ENCODE measurements at regions of chr10 and their contacts with region 1.

Region 1: GRCh38 chr10:6088721-6089390 is at the start of gene RBM17:
- DNase-seq: peak; percentile 96
- H3K4me3 Mint-ChIP-seq: peak within 1 kb of the TSS; percentile 98
- H3K27ac Mint-ChIP-seq: peak within 1 kb of the TSS; percentile 75
- H3K4me1 Mint-ChIP-seq: peaks cover 74% of the 10 kb centered on the region
- H3K27me3 Mint-ChIP-seq: peaks cover 4% of the 10 kb centered on the region

Region 2: GRCh38 chr10:6014241-6014761 is 74.6 kb before region 1 on chr10:
- CTCF ChIA-PET with region 1: interaction called, 25 read pairs
- DNase-seq: peak; percentile 77
- H3K4me3 Mint-ChIP-seq: peak overlapping the region; percentile 30
- H3K27ac Mint-ChIP-seq: peak overlapping the region; percentile 99
- H3K4me1 Mint-ChIP-seq: peaks cover 43% of the 10 kb centered on the region
- H3K27me3 Mint-ChIP-seq: no peaks in the 10 kb centered on the region

Region 3: DNA sequence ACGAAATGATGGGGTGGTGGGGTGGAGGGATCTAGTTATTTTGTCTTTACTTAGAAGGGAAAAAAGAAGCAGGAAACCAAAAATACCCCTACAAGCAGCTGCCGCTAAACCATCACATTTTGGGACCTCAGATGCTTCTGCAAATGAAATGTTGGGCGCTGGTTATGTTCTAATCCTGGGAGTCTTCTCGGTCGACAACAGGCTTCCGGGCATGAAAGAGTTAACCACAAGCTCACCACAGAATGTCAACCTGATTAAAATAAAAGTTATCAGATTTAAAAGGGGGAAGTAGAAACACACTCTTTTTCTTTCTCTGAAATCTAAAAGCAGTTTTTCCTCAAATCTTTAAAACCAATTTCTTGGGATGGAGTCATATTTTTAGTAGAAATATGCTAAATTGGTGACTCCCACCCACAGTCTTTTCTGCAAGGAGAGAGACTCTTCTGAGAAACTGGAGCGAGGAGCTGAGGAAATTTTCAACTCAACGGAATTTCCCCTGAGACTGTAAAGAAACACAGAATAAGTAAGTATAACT is 43.5 kb before region 1 on chr10:
- CTCF ChIA-PET with region 1: interaction called, 47 read pairs
- DNase-seq: peak; percentile 58
- H3K4me3 Mint-ChIP-seq: peak overlapping the region; percentile 69
- H3K27ac Mint-ChIP-seq: peak overlapping the region; percentile 88
- H3K4me1 Mint-ChIP-seq: peaks cover 89% of the 10 kb centered on the region
- H3K27me3 Mint-ChIP-seq: no peaks in the 10 kb centered on the region

Region 4: DNA sequence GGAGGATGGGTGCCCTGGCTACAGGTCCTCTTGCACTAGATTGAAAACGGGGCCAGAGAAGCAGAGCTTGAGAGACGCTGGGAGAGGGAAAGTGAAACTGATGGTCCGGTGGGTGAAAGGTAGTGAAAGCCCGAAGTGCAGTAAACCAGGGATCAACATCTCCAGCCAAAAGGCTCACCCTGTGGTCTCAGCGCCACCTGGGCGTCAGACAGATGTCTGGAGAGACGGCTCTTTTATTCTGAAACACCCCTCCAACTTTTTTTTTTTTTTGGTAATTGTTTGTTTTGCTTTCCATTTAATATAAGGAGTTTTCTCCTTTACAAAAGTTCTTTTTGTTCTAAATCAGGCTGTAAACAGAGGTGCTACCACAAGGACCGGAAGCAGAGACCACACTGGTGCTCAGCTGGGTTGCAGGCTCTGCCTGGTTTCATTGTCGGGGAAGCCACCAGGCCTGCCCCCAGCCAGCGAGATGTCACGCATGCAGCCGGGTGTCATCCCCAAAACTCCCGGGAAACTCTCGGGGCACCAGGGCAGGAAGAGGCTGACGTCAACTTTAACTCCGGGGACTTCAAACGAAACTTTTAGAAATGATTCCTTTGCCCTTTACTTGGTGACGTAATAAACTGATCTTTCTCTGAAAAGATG is 37.9 kb before region 1 on chr10:
- CTCF ChIA-PET with region 1: interaction called, 47 read pairs
- DNase-seq: peak; percentile 97
- H3K4me3 Mint-ChIP-seq: peak overlapping the region; percentile 87
- H3K27ac Mint-ChIP-seq: peak overlapping the region; percentile 99
- H3K4me1 Mint-ChIP-seq: peaks cover 86% of the 10 kb centered on the region
- H3K27me3 Mint-ChIP-seq: no peaks in the 10 kb centered on the region

Region 5: DNA sequence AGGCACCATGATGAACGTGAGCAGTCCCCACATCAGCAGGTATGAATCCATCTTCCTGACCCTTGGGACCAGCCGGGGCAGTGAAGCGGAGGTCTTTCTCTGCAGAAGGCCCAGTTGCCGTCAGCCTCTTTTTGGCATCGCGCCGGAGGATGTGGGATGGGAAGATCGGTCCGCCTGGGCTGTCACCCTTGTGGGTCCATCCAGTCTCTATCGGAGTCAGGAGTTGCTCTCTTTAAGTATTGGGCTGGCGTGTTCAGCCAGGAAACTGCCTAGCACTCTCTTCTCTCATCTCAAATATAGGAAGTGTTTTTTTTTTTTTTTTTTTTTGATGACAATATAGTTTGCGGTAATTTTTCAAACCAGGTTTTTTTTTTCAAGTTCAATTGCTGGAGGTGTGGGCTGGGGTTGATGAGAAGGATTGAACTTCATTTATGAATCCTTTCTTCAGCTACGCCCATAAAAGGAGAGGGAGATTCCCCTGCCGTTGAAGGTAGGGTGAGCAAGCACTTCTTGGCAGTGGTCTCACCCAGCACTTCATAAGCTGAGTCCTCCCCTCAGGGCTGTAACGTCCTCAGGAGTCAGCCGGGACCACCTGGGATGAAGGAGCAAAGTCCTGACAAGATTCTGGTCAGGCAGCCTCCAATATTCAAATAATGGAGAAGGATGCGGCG is 26.6 kb before region 1 on chr10 and contains the start of gene IL2RA:
- CTCF ChIA-PET with region 1: interaction called, 69 read pairs
- DNase-seq: peak; percentile 75
- H3K4me3 Mint-ChIP-seq: peak within 1 kb of the TSS; percentile 81
- H3K27ac Mint-ChIP-seq: peak within 1 kb of the TSS; percentile 95
- H3K4me1 Mint-ChIP-seq: peaks cover 74% of the 10 kb centered on the region
- H3K27me3 Mint-ChIP-seq: no peaks in the 10 kb centered on the region

Region 6: DNA sequence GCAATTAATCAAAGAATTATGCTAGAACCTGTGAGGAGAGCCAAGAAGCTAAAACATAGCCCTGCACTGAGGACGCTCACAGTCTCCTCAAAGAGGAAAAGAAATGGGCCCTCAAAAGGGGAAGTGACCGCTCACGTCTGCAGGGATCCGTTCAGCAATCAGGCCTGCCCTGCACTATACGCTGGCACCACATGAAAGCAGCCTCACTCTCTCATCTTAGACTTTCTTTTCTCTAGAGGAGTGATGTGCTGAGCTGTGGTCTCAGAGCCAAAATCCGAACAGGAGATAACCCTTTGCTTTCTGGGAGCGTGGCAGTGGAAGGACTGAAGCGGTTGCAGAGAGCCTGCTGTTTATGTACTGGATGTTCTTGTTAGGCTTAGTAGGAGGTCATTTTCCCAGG is 20.4 kb before region 1 on chr10:
- CTCF ChIA-PET with region 1: interaction called, 69 read pairs
- DNase-seq: peak; percentile 82
- H3K4me3 Mint-ChIP-seq: peak overlapping the region; percentile 70
- H3K27ac Mint-ChIP-seq: peak overlapping the region; percentile 97
- H3K4me1 Mint-ChIP-seq: peaks cover 95% of the 10 kb centered on the region
- H3K27me3 Mint-ChIP-seq: no peaks in the 10 kb centered on the region

Measured in activated naive CD4-positive, alpha-beta T cell treated with anti-CD3 and anti-CD28 coated beads, Interleukin-2, amount 10 ng/mL, durations not matched to agents 7 days and 5 days (primary cell).